HepG2 (cell line): ENCODE measurements at regions of chr13 and their contacts with region 1.

Region 1: DNA sequence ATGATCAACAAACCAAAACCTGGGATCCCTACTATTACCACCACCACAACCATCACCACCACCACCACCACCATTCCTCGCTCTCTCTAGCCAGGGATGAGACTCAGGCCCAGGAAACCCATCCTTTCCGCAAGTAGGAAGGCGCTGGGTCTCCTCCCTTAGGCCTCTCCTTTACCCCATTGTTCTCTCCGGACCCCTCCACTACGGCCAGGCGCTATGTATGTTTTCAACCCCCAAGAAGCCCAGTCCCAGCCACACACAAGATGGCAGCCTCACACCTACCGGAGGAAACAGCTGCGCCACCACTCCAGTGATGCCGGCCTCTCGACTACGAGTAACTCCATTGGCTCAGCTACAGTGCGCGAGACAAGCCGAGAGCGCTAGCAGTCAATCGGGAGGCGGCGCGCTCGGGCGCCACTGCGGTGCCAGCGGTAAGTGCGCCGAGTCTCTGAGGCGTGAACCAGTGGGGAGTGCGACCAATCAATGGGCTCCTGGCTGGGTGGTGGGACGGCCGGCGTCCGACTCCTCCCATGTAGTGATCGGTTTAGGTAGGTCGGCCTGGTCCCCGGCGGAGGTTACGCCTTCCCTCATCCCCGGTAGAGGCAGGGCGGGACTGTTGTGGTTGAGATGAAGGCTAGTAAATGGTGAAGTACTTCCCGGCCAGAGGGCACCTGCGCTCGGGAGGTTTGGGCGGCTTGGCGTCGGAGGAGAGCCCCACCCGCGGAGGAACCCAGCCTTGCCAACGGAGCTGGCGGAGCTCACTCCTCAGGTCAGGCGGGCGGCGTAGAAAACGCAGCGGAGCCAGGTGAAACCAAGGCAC is at the starts of genes CAB39L and SETDB2:
- DNase-seq: peak; percentile 98
- ATAC-seq: peak; percentile 96
- H3K4me3 ChIP-seq: peak within 1 kb of the TSS; percentile 77 to 89 (median 83)
- H3K27ac ChIP-seq: peak within 1 kb of the TSS; percentile 94
- H3K4me1 ChIP-seq: peaks cover 35% of the 10 kb centered on the region
- H3K27me3 ChIP-seq: no peaks in the 10 kb centered on the region; a peak in 1 of 5 replicates
- CTCF ChIP-seq: peak; percentile 80
- EP300 ChIP-seq: 0 out of 4 replicates have a peak, but pooled peaks of 1 of the 2 experiments have one; percentile 17
- POLR2A ChIP-seq: peak; percentile 76
- RAD21 ChIP-seq: peak; percentile 46
- total RNA-seq, gene CAB39L: 6.1 and 8.3 TPM in 2 replicates
- total RNA-seq, gene SETDB2: 8.7 and 9.5 TPM in 2 replicates

Region 2: GRCh38 chr13:49300739-49301589 is 142.9 kb before region 1 on chr13:
- CTCF ChIA-PET with region 1: no interaction called
- POLR2A ChIA-PET with region 1: no interaction called
- in situ Hi-C with region 1: no loop called
- intact Hi-C with region 1: loop called (anchors 5 kb)
- DNase-seq: peak; percentile 77
- ATAC-seq: peak; percentile 67
- H3K4me3 ChIP-seq: peak overlapping the region; percentile 53 to 70 (median 53); a peak in 5 of 6 replicates
- H3K27ac ChIP-seq: no peak overlapping the region
- H3K4me1 ChIP-seq: peaks cover 88% of the 10 kb centered on the region
- H3K27me3 ChIP-seq: no peaks in the 10 kb centered on the region
- CTCF ChIP-seq: peak; percentile 93
- EP300 ChIP-seq: no peak
- POLR2A ChIP-seq: no peak
- RAD21 ChIP-seq: peak; percentile 81

Region 3: DNA sequence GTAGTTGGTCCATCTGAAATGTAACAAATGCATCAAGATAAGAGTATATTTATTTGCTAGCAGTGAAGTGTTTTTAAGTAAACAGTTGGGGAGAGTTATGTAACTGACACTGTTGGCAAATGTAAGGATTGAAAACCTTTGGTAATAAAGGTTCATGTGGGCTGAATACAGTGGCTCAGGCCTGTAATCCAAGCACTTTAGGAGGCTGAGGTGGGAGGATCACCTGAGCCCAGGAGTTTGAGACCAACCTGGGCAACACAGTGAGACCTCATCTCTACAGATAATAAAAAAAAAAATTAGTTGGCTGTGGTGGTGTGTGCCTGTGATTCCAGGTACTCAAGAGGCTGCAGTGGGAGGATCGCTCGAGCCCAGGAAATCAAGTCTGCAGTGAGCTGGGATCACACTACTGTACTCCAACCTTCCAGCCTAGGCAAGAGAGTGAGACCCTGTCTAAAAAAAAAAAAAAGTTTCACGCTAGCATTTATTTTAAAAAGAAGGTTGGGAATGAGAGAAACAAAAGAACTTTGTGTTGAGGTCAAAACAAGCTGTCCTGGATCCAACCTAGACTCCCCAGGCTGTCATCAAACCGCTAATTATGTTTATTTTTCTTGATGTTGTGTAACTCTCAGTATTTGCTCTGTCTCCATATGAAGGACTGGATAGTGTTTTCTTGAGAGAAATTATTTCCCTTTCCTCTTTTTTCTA is 20.9 kb after region 1 on chr13:
- CTCF ChIA-PET with region 1: no interaction called
- POLR2A ChIA-PET with region 1: interaction called, 123 read pairs
- in situ Hi-C with region 1: no loop called
- intact Hi-C with region 1: loop called (anchors 1 kb)
- DNase-seq: peak; percentile 92
- ATAC-seq: peak; percentile 85
- H3K4me3 ChIP-seq: peak overlapping the region in 2 of 3 experiments; percentile 8 to 22; a peak in 2 of 6 replicates
- H3K27ac ChIP-seq: peak overlapping the region; percentile 96
- H3K4me1 ChIP-seq: peaks cover 40% of the 10 kb centered on the region
- H3K27me3 ChIP-seq: no peaks in the 10 kb centered on the region
- CTCF ChIP-seq: no peak
- EP300 ChIP-seq: peak in 1 of 2 experiments; percentile 85; a peak in 2 of 4 replicates
- POLR2A ChIP-seq: no peak
- RAD21 ChIP-seq: no peak

Region 4: GRCh38 chr13:49495783-49496762 is 52.2 kb after region 1 on chr13 and contains the start of gene PHF11:
- CTCF ChIA-PET with region 1: no interaction called
- POLR2A ChIA-PET with region 1: interaction called, 47 read pairs
- in situ Hi-C with region 1: no loop called
- intact Hi-C with region 1: no loop called
- DNase-seq: peak; percentile 63
- ATAC-seq: peak; percentile 90
- H3K4me3 ChIP-seq: peak within 1 kb of the TSS; percentile 65 to 77 (median 75)
- H3K27ac ChIP-seq: peak within 1 kb of the TSS; percentile 95
- H3K4me1 ChIP-seq: peaks cover 21% of the 10 kb centered on the region
- H3K27me3 ChIP-seq: no peaks in the 10 kb centered on the region
- CTCF ChIP-seq: peak; percentile 42; the same call in 1 of the 2 replicates
- EP300 ChIP-seq: no peak
- POLR2A ChIP-seq: peak; percentile 7 to 68; a peak in 3 of 4 replicates
- RAD21 ChIP-seq: peak; percentile 35; the same call in 1 of the 2 replicates
- total RNA-seq, gene PHF11: 9.0 and 15.8 TPM in 2 replicates

Region 5: DNA sequence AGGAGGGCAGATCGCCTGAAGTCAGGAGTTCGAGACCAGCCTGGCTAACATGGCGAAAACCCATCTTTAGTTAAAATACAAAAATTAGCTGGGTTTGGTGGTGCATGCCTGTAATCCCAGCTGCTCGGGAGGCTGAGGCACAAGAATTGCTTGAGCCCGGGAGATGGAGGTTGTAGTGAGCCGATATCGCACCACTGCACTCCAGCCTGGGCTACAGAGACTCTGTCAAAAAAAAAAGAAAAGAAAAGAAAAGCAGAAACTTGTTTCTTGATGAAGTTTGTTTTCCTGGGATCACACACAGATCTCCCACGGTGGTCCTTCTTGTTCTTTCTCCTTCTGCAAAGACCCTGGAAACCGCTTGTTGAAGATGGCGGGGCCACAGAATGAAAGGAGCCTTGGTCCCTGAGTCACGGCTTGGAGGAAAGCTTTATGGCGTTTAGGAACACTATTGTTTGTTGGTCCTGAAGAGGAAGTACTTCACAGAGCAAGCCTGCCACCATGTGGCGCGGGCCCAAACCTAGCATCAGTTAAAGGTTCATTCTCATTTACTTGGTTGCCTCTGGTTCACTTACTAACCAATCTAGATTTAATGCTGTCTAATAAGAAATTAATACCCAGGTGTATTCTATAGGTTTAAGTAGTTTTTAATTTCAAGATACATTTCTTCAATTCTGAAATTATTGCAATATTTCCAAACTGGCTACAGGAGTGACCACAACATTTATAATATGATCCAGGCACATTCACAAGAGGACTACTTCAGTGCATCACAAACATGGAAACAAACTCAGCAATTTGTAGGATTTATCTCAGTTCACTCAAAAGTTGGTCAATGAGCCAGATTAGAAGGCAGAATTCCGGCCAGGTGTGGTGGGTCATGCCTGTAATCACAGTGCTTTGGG is 163.1 kb after region 1 on chr13:
- CTCF ChIA-PET with region 1: no interaction called
- POLR2A ChIA-PET with region 1: interaction called, 6 read pairs
- in situ Hi-C with region 1: no loop called
- intact Hi-C with region 1: loop called (anchors 1 kb)
- DNase-seq: peak; percentile 77
- ATAC-seq: peak; percentile 96
- H3K4me3 ChIP-seq: peak overlapping the region; percentile 31 to 67 (median 62); a peak in 5 of 6 replicates
- H3K27ac ChIP-seq: no peak overlapping the region
- H3K4me1 ChIP-seq: peaks cover 32% of the 10 kb centered on the region
- H3K27me3 ChIP-seq: no peaks in the 10 kb centered on the region
- CTCF ChIP-seq: peak; percentile 91
- EP300 ChIP-seq: no peak
- POLR2A ChIP-seq: no peak
- RAD21 ChIP-seq: peak; percentile 88